ENCODE measurements at regions of chr10 and their contacts with region 1.

Region 1: DNA sequence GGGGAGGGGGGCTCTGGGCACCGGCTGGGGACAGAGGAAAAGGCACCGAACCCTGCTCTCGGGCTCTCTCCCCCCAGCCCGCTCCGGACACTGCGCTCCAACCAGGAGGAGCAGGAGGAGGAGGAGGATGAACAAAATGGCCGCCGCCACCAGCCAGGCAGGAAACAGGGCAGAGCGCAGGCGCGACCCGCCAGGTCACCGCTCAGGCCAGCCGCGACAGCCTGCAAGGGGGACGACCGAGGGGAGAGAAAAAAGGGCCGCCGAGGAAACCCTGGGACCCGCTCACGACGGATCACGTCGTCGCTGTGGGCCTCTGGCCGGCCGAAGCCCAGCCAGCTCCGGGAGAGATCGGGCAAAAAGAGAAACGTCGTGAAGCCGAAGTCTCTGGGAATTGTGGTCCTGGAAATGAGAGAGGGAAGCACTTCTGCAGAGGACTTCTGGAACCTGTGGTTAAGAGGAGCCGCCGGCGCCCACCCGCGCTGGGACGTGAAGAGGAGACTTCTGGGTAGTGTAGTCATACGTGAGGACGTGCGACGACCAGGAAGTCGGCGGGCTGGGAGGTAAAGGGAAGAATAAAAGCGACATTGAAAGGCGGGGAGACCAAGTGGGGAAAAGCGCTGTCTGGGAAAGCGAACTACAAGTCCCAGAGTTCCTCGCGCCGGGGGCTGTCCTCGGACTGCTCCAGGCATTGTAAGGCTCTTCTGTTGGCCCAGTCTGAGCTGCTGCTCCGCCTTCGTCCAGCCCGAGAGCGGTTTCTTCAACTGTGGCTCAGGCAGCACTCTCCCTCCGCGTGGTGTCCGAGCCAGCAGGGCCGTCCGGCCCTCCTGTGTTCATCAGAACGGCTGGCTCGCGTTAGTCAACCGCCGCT is at the start of gene TIAL1:
- DNase-seq: peak; percentile 89
- H3K4me3 Mint-ChIP-seq: peak within 1 kb of the TSS; percentile 95
- H3K27ac Mint-ChIP-seq: peak within 1 kb of the TSS; percentile 95
- H3K4me1 Mint-ChIP-seq: peaks cover 42% of the 10 kb centered on the region
- H3K27me3 Mint-ChIP-seq: no peaks in the 10 kb centered on the region
- total RNA-seq, gene TIAL1: 183 and 184 TPM in 2 replicates

Region 2: DNA sequence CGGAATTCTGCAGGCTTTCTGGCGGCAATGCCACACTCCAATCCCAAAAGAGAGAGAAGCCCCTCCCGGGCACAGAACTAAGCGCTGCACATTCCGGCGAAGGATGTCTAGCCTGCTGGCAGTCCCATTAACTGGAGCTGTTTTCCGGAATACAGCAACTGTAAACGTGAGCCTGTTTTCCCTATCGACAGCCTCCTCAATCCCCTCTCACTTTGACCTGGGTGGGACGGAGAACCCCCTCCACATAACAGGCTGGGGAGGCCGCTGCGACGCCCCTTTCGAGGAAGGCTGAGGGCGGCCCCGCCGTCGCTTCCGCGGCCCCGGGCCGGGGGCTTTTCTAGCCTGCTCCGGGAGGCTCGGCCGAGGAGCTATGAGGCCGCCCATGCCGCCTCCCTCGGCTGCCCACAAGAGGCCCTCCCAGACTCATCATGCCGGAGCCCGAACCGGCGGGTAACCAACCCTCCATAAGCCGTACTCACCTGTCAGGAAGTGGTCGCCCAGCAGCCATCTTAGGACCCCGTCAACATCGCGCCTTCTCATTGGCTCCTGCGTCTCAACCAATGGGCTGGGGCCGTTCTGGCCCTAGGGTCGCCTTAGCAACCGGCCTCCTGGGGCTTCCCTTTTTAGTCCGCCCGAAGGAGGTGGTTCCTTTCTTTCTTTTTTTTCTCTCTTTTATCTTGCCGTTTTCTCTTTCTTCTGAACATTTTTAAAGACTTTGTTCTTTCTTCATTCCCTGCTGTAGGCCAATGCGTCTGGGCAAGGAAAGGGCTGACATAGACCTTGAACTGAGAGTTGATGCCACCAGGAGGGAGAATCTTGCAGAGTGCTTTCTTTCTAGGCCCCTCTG is 1254.8 kb before region 1 on chr10 and contains the start of gene FAM204A:
- intact Hi-C with region 1: loop called (anchors 10 kb)
- DNase-seq: peak; percentile 95
- H3K4me3 Mint-ChIP-seq: peak within 1 kb of the TSS; percentile 94
- H3K27ac Mint-ChIP-seq: peak within 1 kb of the TSS; percentile 82
- H3K4me1 Mint-ChIP-seq: peaks cover 20% of the 10 kb centered on the region
- H3K27me3 Mint-ChIP-seq: peaks cover 3% of the 10 kb centered on the region
- total RNA-seq, gene FAM204A: 53.1 and 55.6 TPM in 2 replicates

Region 3: GRCh38 chr10:119022846-119023552 is 573.8 kb before region 1 on chr10:
- intact Hi-C with region 1: no loop called
- DNase-seq: no peak
- H3K4me3 Mint-ChIP-seq: no peak overlapping the region
- H3K27ac Mint-ChIP-seq: no peak overlapping the region
- H3K4me1 Mint-ChIP-seq: no peaks in the 10 kb centered on the region
- H3K27me3 Mint-ChIP-seq: peaks cover 19% of the 10 kb centered on the region

Region 4: GRCh38 chr10:119207367-119207668 is 389.5 kb before region 1 on chr10 and contains the start of gene GRK5:
- intact Hi-C with region 1: loop called (anchors 2 kb)
- DNase-seq: peak; percentile 97
- H3K4me3 Mint-ChIP-seq: peak within 1 kb of the TSS; percentile 98
- H3K27ac Mint-ChIP-seq: peak within 1 kb of the TSS; percentile 100
- H3K4me1 Mint-ChIP-seq: peaks cover 41% of the 10 kb centered on the region
- H3K27me3 Mint-ChIP-seq: no peaks in the 10 kb centered on the region
- total RNA-seq, gene GRK5: 24.4 and 24.7 TPM in 2 replicates

Region 5: DNA sequence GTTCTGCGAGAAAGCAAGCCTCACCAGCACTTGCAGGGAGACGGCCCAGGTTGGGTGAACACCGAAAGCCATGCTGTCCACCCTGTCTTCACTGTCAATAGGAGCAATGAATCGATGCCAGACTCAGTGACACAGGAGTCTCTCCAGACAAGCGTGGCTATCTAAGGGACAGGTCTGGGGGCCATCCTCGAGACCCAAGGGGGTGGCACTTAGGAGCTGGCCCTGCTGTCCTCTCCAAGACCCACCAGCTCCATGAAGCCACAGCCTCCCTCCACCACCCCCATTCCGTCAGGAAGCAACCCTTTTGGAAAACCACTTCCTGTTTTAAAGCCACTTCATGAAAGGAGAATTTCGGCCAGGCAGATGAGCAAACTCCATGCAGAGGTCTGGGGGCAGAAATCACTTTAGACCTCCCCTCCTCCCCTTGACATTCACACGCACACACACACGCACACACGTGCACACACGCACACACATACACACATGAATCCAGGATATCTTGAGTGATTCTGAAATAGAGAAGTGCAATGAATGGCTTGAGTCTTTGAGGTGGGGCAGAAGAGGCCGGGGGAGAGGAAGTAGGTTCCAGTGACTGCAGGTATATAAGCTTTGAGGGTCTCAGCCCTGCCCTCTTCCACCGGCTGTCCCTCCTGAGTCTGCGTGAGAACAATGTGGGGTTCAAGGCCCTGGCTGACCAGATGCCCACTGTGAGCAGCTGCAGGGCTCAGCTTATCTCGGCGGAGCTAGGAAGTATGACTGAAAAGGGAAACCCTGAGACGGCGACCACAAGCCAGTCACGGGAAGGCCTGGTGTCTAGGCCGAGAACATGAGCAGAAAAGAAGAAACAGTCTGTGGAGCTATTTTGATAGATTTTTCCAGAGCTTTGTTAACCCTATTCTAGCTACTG is 79.3 kb before region 1 on chr10:
- intact Hi-C with region 1: loop called (anchors 5 kb)
- DNase-seq: peak; percentile 51
- H3K4me3 Mint-ChIP-seq: peak overlapping the region; percentile 47
- H3K27ac Mint-ChIP-seq: peak overlapping the region; percentile 77
- H3K4me1 Mint-ChIP-seq: peaks cover 36% of the 10 kb centered on the region
- H3K27me3 Mint-ChIP-seq: no peaks in the 10 kb centered on the region

Region 6: GRCh38 chr10:119643306-119644204 is 46.8 kb after region 1 on chr10:
- intact Hi-C with region 1: loop called (anchors 2 kb)
- DNase-seq: no peak
- H3K4me3 Mint-ChIP-seq: no peak overlapping the region
- H3K27ac Mint-ChIP-seq: no peak overlapping the region
- H3K4me1 Mint-ChIP-seq: peaks cover 20% of the 10 kb centered on the region
- H3K27me3 Mint-ChIP-seq: peaks cover 54% of the 10 kb centered on the region

Region 7: GRCh38 chr10:119725828-119726675 is 129.3 kb after region 1 on chr10 and contains the start of gene INPP5F:
- intact Hi-C with region 1: loop called (anchors 5 kb)
- DNase-seq: peak; percentile 98
- H3K4me3 Mint-ChIP-seq: peak within 1 kb of the TSS; percentile 83
- H3K27ac Mint-ChIP-seq: peak within 1 kb of the TSS; percentile 80
- H3K4me1 Mint-ChIP-seq: peaks cover 33% of the 10 kb centered on the region
- H3K27me3 Mint-ChIP-seq: peaks cover 4% of the 10 kb centered on the region
- total RNA-seq, gene INPP5F: 10.2 and 11.9 TPM in 2 replicates

Measured in activated T-helper 2 cell treated with anti-CD3 and anti-CD28 coated beads, Interferon-gamma antibody, Interleukin-2, Interleukin-4, amounts not matched to agents 10 μg/mL and 5 μg/mL and 100 μg/mL, durations not matched to agents 14 hours and 24 hours and 36 hours (primary cell).